Adrenal gland (tissue), 19 donors: ENCODE measurements at regions of chr9 and their contacts with region 1.

Region 1: DNA sequence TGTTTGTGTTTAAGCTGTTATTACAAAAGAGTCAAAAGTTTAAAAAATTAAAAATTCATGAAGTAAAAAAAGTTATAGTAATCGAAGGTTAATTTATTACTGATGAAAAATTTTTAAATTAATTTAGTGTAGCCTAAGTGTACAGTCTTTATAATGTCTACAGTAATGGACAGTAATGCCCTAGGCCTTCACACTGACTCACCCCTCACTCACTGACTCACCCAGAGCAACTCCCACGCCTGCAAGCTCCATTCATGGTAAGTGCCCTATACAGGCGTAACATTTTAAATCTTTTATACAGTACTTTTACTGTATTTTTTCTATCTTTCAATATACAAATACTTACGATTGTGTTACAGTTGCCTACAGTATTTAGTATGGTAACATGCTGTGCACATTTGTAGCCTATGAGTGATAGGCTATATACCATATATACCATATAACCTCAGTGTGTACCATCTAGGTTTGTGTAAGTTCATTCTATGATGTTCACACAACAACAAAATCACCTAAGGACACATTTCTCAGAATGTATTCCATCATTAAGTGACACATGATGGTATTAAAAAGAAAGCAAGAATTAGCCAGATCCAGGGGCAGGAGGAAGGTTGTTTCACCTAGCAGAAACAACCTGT is 40.1 kb downstream of the DCAF10 start:
- DNase-seq: peak in 4 of 7 donors; percentile 19 to 47 (median 33)
- H3K4me3 ChIP-seq: no peak overlapping the region
- H3K27ac ChIP-seq: no peak overlapping the region
- H3K4me1 ChIP-seq: peaks cover 0 to 5% of the 10 kb centered on the region in 2 donors
- H3K27me3 ChIP-seq: no peaks in the 10 kb centered on the region
- CTCF ChIP-seq: no peak
- POLR2A ChIP-seq: no peak

Region 2: GRCh38 chr9:37371565-37372464 is 468.9 kb before region 1 on chr9:
- intact Hi-C with region 1: no loop called
- DNase-seq: no peak
- H3K4me3 ChIP-seq: no peak overlapping the region
- H3K27ac ChIP-seq: no peak overlapping the region
- H3K4me1 ChIP-seq: no peaks in the 10 kb centered on the region
- H3K27me3 ChIP-seq: no peaks in the 10 kb centered on the region
- CTCF ChIP-seq: no peak
- POLR2A ChIP-seq: no peak

Region 3: DNA sequence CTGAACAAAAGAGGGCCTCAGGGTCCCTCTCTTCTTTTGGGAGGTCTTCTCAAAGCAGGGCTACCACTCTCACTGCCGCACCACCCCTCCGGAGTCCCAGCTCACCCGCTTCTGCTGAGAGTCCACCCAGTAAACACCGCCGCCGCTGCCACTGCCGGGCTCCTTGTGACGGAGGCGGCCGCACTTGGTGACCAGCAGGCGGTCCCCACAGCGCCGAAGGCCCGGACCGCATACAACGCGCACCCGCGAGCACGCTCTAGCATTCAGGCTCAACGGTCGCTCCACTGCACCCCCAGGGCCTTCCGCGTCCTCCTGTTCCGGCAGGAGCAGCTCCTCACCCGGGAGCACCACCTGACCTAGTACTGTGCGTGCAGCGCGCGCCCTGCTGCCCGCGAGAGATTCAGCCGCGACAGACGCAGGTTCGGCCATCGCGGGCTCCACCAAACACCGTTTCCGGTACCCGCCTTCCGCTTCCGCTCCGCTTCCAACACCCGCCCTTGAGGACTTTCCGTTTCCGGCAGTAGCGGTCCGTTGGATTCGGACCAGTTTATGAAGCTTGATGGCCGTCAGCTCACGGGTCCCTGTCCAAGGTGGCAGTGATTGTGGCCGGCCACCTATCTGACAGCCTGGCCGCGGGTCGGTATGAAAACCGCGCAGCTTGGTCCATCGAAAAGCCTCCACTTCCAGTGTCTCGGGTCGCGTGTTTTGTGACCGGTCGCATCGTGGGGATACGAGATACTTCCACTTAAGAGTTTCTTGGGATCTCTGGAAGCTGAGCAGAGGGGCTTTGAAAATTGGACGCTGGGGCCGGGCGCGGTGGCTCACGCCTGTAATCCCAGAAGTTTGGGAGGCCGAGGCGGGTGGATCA is 55.8 kb before region 1 on chr9 and contains the start of gene EXOSC3:
- intact Hi-C with region 1: loop called in 1 of 2 experiments (anchors 10 kb)
- DNase-seq: peak; percentile 87 to 95 (median 93)
- H3K4me3 ChIP-seq: peak within 1 kb of the TSS; percentile 71 to 92 (median 82)
- H3K27ac ChIP-seq: peak within 1 kb of the TSS; percentile 54 to 94 (median 83)
- H3K4me1 ChIP-seq: peaks cover 11 to 34% of the 10 kb centered on the region in 2 donors
- H3K27me3 ChIP-seq: no peaks in the 10 kb centered on the region
- CTCF ChIP-seq: peak in 3 of 6 experiments; percentile 26 to 39 (median 27)
- POLR2A ChIP-seq: peak; percentile 48 to 79
- total RNA-seq, gene EXOSC3: 32.2 to 67.8 (median 43.8) TPM